ENCODE measurements at regions of chr11 and their contacts with region 1.

Region 1: GRCh38 chr11:38791302-38791961 is 2193.4 kb upstream of the RAG2 start:
- DNase-seq: peak; percentile 25
- ATAC-seq: peak; percentile 80; the same call in 1 of the 2 replicates
- H3K4me3 ChIP-seq: no peak overlapping the region
- H3K27ac ChIP-seq: no peak overlapping the region
- H3K4me1 ChIP-seq: no peaks in the 10 kb centered on the region
- H3K27me3 ChIP-seq: no peaks in the 10 kb centered on the region
- CTCF ChIP-seq: peak; percentile 73; the same call in 1 of the 2 replicates

Region 2: DNA sequence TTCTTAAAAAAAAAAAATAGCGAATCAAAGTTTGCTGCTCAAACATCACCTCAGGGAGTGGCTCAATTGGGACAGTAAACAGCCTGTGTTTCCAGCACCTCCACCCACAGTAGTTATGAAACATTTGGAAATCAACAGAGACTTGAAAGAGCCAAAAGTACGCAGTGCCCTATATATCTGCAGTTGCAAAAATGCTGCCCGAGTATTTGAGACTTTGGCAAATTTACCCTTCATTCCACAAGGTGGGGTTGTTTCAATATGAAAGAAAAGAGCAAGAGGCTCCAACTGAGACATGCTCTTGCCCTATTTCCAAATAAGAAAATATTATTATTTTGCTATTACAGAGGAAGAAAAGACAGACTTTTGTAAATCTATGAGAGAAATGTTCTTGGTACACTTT is 1342.3 kb before region 1 on chr11:
- CTCF ChIA-PET with region 1: no interaction called
- POLR2A ChIA-PET with region 1: no interaction called
- in situ Hi-C with region 1: no loop called
- intact Hi-C with region 1: loop called (anchors 10 kb)
- DNase-seq: no peak
- ATAC-seq: no peak; the same call in 1 of the 2 replicates
- H3K4me3 ChIP-seq: no peak overlapping the region
- H3K27ac ChIP-seq: no peak overlapping the region
- H3K4me1 ChIP-seq: no peaks in the 10 kb centered on the region
- H3K27me3 ChIP-seq: no peaks in the 10 kb centered on the region
- CTCF ChIP-seq: peak; percentile 42; the same call in 1 of the 2 replicates